Posterior vena cava (tissue), 2 donors: ENCODE measurements at regions of chr9 and their contacts with region 1.

Region 1: GRCh38 chr9:80595192-80595591 is 1023.4 kb downstream of the TLE4 start:
- DNase-seq: no peak

Region 2: DNA sequence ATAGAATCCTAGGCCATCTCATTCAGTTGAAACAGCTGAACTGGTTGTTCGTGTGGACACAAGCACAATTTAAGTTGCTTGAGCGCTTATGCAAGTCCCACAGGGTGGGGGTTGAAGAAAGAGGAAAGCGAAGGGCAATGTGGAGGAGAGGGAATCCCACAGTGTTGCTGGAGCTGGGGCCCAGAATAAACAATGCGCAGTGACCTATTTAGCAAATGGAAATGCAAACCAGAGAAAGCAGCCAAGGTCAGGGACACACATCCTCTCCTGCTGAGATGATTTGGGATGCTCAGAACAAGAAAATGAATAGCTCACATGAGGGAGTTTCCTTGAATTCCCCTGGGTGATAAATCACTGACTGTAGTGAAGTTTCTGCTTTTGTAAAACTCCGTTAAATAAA is 185.1 kb before region 1 on chr9:
- intact Hi-C with region 1: no loop called
- DNase-seq: no peak

Region 3: GRCh38 chr9:80516678-80517077 is 78.5 kb before region 1 on chr9:
- intact Hi-C with region 1: no loop called
- DNase-seq: no peak

Region 4: DNA sequence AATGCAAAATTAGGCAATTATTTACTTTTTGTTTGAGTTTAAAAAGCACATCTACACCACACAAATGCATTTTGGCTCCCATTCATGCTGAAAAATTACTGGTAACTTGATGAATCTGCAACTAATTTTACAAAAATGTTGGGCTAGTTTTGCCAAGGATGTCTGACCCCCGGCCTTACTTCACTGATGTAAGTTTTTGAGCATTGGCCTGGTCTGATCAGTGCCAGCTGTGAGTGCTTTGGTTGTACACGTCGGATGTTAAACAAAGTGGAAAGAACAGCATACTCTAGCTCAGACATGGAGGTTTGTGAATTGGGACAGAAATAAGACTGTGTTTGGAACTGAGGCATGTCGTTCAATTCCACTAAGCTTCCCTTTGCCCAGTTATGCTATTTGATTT is 20.8 kb after region 1 on chr9:
- intact Hi-C with region 1: no loop called
- DNase-seq: no peak

Region 5: GRCh38 chr9:80632041-80632440 is 36.8 kb after region 1 on chr9:
- intact Hi-C with region 1: loop called in 1 of 2 experiments (anchors 2 kb)
- DNase-seq: no peak

Region 6: GRCh38 chr9:80649001-80649420 is 53.8 kb after region 1 on chr9:
- intact Hi-C with region 1: no loop called
- DNase-seq: no peak